ENCODE measurements at regions of chr2 and their contacts with region 1.

Region 1: GRCh38 chr2:225270861-225271260 is 128.6 kb upstream of the NYAP2 start:
- DNase-seq: peak; percentile 92
- H3K4me3 ChIP-seq: peak overlapping the region; percentile 3
- H3K27ac ChIP-seq: peak overlapping the region; percentile 77
- H3K4me1 ChIP-seq: peaks cover 53% of the 10 kb centered on the region
- CTCF ChIP-seq: peak; percentile 38; the same call in 1 of the 2 replicates

Region 2: GRCh38 chr2:224666951-224667553 is 603.8 kb before region 1 on chr2:
- CTCF ChIA-PET with region 1: no interaction called
- POLR2A ChIA-PET with region 1: no interaction called
- intact Hi-C with region 1: loop called (anchors 5 kb)
- DNase-seq: peak; percentile 95
- H3K4me3 ChIP-seq: peak overlapping the region; percentile 53
- H3K27ac ChIP-seq: peak overlapping the region; percentile 98
- H3K4me1 ChIP-seq: peaks cover 53% of the 10 kb centered on the region
- CTCF ChIP-seq: no peak

Region 3: GRCh38 chr2:224778474-224778877 is 492.4 kb before region 1 on chr2:
- CTCF ChIA-PET with region 1: no interaction called
- POLR2A ChIA-PET with region 1: no interaction called
- intact Hi-C with region 1: no loop called
- DNase-seq: peak; percentile 73
- H3K4me3 ChIP-seq: no peak overlapping the region
- H3K27ac ChIP-seq: peak overlapping the region; percentile 0
- H3K4me1 ChIP-seq: peaks cover 31% of the 10 kb centered on the region
- CTCF ChIP-seq: peak; percentile 99

Region 4: GRCh38 chr2:224946895-224947294 is 324.0 kb before region 1 on chr2:
- CTCF ChIA-PET with region 1: no interaction called
- POLR2A ChIA-PET with region 1: no interaction called
- intact Hi-C with region 1: loop called (anchors 1 kb)
- DNase-seq: peak; percentile 86
- H3K4me3 ChIP-seq: peak overlapping the region; percentile 83
- H3K27ac ChIP-seq: peak overlapping the region; percentile 92
- H3K4me1 ChIP-seq: peaks cover 80% of the 10 kb centered on the region
- CTCF ChIP-seq: no peak

Region 5: GRCh38 chr2:225437319-225437718 is 166.5 kb after region 1 on chr2:
- CTCF ChIA-PET with region 1: no interaction called
- POLR2A ChIA-PET with region 1: no interaction called
- intact Hi-C with region 1: loop called (anchors 5 kb)
- DNase-seq: no peak
- H3K4me3 ChIP-seq: no peak overlapping the region
- H3K27ac ChIP-seq: no peak overlapping the region
- H3K4me1 ChIP-seq: peaks cover 13% of the 10 kb centered on the region
- CTCF ChIP-seq: no peak

Region 6: GRCh38 chr2:226151132-226151531 is 880.3 kb after region 1 on chr2:
- CTCF ChIA-PET with region 1: no interaction called
- POLR2A ChIA-PET with region 1: no interaction called
- intact Hi-C with region 1: no loop called
- DNase-seq: no peak
- H3K4me3 ChIP-seq: no peak overlapping the region
- H3K27ac ChIP-seq: no peak overlapping the region
- H3K4me1 ChIP-seq: no peaks in the 10 kb centered on the region
- CTCF ChIP-seq: no peak

Region 7: DNA sequence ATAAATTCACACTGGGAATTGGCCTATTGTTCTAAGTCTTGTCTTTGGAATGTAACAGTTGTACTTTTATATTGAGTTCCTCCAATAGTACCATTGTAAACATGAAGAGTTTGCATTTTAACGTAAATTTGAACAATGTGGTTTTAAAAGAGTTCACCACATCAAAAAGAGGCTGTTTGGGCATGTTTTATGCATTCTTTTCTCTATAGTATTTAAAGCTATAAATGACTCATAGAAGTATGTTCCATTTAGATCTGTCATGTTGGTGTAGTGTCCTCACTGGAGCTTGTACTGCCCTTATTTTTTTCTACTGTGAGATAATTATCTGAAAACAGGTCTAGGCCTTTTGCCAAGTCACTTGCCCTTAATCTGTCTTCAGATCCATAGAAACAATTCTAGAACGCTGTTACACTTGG is 1706.9 kb after region 1 on chr2:
- CTCF ChIA-PET with region 1: no interaction called
- POLR2A ChIA-PET with region 1: no interaction called
- intact Hi-C with region 1: loop called (anchors 10 kb)
- DNase-seq: no peak
- H3K4me3 ChIP-seq: no peak overlapping the region
- H3K27ac ChIP-seq: peak overlapping the region; percentile 10
- H3K4me1 ChIP-seq: peaks cover 82% of the 10 kb centered on the region
- CTCF ChIP-seq: no peak

Measured in OCI-LY7 (cell line).